Dorsolateral prefrontal cortex (tissue), 120 donors: ENCODE measurements at regions of chr15 and their contacts with region 1.

Region 1: DNA sequence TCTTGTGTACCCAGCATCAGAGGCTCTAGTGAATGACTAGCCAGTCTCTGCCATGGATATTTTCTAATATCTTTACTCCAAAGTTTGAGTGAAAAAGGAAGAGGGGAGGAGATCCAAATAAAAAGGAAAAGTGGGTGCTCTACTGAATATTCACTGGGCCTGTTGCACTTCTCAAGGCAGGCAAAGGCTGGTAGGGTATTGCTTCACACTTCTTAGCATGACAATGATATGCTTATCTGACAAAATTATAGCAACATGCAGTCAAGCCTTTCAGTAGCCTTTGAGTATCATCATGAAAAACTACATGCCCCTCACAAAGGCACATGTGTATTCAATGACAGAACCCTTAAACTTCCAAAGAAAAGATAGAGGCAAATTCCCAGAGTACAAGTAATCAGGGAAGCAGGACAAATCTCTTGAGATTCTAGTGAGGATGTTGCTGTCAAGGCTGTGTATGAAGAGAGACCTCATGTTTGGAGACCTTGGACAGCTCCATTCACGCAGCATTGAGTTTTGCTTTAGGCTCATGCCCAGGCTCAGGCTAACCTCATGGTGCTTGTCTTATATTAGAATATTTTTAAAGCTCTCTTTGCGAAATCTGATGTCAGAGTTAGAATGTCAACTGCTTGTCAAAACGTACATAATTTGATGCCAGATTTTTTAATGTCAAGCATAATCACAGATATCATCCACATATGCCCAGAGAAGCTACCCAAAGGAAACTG is 506.9 kb downstream of the OCA2 start:
- DNase-seq: no peak
- H3K4me3 ChIP-seq: no peak overlapping the region
- H3K27ac ChIP-seq: no peak overlapping the region
- H3K27me3 ChIP-seq: peaks cover 0 to 7% (median 0%) of the 10 kb centered on the region in 45 donors
- CTCF ChIP-seq: no peak

Region 2: GRCh38 chr15:27669641-27670040 is 77.4 kb after region 1 on chr15:
- intact Hi-C with region 1: loop called in 1 of 2 experiments (anchors 10 kb)
- DNase-seq: no peak
- H3K4me3 ChIP-seq: no peak overlapping the region
- H3K27ac ChIP-seq: no peak overlapping the region
- H3K27me3 ChIP-seq: no peaks in the 10 kb centered on the region
- CTCF ChIP-seq: no peak

Region 3: GRCh38 chr15:27683121-27683520 is 90.9 kb after region 1 on chr15:
- intact Hi-C with region 1: no loop called
- DNase-seq: no peak
- H3K4me3 ChIP-seq: no peak overlapping the region
- H3K27ac ChIP-seq: no peak overlapping the region
- H3K27me3 ChIP-seq: no peaks in the 10 kb centered on the region
- CTCF ChIP-seq: no peak

Region 4: GRCh38 chr15:27694506-27695087 is 102.4 kb after region 1 on chr15:
- intact Hi-C with region 1: loop called in 1 of 2 experiments (anchors 10 kb)
- DNase-seq: no peak
- H3K4me3 ChIP-seq: no peak overlapping the region
- H3K27ac ChIP-seq: no peak overlapping the region
- H3K27me3 ChIP-seq: no peaks in the 10 kb centered on the region
- CTCF ChIP-seq: no peak